ENCODE measurements at regions of chr18 and their contacts with region 1.

Region 1: DNA sequence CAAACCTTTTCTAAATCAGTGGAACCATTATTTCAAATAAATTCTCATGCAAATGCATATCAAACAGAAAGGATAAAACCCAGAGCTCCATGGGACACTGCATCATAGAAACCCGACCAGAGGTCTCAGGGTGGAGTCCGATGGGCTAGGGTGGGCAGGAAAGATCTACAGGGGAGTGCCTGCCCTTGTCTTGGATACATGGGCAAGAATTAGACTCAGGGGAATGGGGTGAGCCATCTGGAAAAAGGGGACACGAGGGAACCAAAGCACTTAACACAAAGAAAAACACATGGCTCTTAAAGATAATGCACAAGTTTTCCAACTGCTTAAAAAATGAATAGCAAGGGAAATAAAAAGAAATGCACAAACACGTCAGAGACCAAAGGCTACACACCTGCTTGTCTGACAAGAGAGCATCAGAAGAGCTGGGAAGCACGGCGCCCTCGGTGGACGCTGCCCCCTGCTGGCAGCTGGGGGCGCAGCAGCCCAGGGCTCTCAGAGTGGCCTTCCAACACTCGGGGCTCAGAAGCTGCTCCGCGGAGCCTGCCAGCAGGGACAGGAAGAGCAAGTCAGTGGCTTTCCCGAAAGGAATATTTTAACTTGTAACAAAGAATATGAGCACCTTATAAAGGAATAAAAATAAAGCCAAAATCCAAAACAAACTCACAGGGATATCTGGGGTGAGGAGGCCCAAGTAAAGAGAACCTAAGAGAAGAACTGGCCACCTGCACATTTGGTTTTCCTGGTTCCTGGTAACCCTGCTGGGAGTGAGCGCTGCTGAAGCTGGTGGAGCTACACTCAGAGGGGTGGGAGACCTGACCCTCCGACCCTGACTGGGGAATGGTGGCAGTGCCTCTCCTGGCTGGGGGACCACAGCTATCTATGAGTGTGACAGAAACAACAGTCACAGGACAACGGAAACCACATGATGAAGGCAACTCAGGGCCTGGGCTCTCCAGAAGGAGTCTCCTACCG is 54.5 kb downstream of the SIGLEC15 start:
- DNase-seq: peak; percentile 79
- CTCF ChIP-seq: peak; percentile 99

Region 2: GRCh38 chr18:45664824-45665763 is 214.9 kb before region 1 on chr18:
- CTCF ChIA-PET with region 1: interaction called, 117 read pairs
- POLR2A ChIA-PET with region 1: no interaction called
- DNase-seq: peak; percentile 76
- CTCF ChIP-seq: peak; percentile 92

Region 3: DNA sequence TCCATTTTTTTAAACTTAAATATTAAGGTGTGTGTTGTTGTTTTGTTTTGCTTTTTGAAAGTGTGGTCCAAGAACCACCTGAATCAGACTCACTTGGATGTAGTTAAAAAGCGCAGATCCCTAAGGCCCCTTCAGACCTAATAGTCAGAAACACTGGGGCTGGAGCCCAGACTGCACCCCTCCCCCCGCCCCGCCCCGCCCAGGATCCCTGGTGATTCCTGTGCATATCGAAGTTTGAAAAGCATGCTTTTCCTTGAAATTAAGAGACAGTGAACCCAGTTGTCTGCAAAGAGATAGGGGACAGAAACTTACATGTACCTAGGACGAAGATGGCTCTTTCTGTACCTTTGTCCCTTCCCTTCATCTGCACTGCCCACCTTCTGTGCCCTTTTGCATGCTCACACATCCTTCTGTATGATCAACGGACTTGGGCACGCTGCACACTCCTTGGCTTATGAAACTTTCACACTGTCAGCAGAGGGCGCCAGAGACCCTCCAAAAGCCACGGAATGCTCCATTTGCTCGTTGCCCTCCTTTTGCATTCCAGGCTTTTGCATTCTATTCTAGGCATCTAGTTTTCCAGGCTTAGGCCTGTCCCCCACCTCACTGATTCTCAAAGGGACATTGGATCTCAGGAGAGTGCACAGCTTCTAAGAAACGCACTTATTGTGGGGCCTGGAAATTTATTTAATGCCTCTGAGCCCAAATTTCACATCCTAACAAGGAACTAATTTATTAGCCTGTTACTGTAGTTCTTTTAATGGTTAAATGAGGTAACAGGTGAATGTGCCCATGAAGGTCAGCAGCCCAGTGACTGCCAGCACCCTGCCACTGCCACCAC is 188.8 kb before region 1 on chr18:
- CTCF ChIA-PET with region 1: interaction called, 83 read pairs
- POLR2A ChIA-PET with region 1: no interaction called
- DNase-seq: peak; percentile 72
- CTCF ChIP-seq: peak; percentile 86

Region 4: DNA sequence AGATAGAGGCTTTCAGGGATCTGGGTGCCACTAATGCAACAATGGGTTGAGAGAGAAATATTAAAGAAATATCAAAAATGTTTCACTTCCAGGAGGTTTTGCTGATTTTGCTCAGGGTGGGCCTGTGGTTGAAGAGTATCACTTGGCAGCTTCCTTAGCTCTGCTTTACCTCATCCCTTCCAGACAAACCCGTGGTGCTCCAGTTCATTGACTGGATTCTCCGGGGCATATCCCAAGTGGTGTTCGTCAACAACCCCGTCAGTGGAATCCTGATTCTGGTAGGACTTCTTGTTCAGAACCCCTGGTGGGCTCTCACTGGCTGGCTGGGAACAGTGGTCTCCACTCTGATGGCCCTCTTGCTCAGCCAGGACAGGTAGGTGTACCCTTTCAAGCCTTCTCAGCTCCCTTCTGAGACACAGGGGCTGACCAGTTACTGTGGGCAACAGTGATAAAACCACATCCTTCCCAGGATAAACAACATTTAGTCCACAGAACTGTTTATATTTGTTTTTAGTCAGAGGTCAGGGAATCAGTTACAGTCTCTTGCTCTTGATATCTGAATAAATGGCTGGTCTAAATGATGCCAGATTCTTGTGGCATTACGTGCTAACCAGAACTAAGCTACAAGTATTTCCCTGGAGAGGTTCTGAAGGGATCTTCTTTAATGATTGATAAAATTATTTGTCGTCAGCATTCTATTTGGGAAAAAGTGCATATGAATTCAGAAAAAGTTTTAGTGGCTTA is 149.0 kb before region 1 on chr18:
- CTCF ChIA-PET with region 1: interaction called, 106 read pairs
- POLR2A ChIA-PET with region 1: no interaction called
- DNase-seq: no peak
- CTCF ChIP-seq: no peak

Region 5: GRCh38 chr18:45863469-45863868 is 16.5 kb before region 1 on chr18:
- CTCF ChIA-PET with region 1: interaction called, 57 read pairs
- POLR2A ChIA-PET with region 1: no interaction called
- DNase-seq: no peak
- CTCF ChIP-seq: no peak

Region 6: DNA sequence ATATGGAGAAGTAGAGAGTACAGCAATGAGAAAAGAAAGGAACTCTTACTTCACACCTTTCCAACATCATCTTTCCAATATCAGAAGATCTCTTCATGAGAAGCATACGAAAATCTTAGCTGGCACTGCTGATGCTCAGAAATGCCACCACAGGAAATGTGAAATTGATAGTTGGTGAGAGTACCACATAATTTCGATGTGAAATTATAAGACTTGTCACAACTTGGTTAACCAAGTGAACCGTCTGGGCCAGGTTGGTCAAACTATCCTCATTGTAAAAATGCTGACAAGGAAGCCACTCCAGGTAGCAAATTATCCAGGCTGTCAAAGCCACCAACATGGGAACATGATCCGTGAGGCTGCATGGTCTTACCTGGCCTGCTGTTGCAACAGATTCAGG is 20.7 kb after region 1 on chr18:
- CTCF ChIA-PET with region 1: interaction called, 65 read pairs
- POLR2A ChIA-PET with region 1: no interaction called
- DNase-seq: no peak
- CTCF ChIP-seq: no peak

Region 7: DNA sequence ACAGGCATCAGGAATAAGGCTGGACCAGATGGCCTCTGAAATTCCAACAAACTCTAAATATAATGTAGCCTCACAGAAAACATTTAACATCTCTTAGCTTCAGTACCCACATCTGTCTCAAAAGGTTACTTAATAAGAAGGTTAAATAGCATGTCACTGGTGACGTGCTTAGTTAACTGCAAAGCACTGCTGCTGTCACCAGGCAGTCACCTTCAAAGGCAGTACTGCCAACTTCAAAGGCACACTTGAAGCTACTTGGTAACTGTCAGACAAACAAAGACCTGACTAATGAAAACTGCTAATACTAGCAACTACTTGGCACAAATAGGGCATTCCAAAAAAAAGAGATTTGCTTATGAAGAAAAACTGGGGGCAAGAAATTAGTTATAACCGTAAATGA is 51.0 kb after region 1 on chr18:
- CTCF ChIA-PET with region 1: interaction called, 15 read pairs
- POLR2A ChIA-PET with region 1: no interaction called
- DNase-seq: no peak
- CTCF ChIP-seq: no peak

Region 8: DNA sequence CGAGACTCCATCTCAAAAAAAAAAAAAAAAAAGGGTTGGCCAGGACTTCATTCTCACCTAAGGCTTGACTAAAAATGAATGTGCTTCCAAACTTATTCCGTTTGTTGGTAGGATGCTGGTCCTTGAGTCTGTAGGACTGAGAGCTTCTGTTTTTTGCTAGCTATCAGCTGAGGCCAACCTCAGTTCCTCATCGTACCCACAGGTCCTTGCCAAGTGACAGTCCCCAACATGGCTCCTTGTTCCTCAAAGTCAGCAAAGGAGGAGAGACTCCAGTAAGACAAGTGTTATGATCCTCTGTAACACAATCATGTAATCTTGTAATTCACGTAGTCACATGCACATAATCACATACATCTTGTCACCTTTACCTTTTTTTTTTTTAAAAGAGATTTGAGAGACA is 261.2 kb after region 1 on chr18:
- CTCF ChIA-PET with region 1: no interaction called
- POLR2A ChIA-PET with region 1: no interaction called
- DNase-seq: no peak
- CTCF ChIP-seq: no peak